CD8-positive, alpha-beta memory T cell (primary cell): ENCODE measurements at regions of chr6 and their contacts with region 1.

Region 1: GRCh38 chr6:110873981-110874879 is at the start of gene AMD1:
- DNase-seq: peak; percentile 89 to 98 (median 95)
- H3K4me3 ChIP-seq: peak within 1 kb of the TSS; percentile 95
- H3K4me3 Mint-ChIP-seq: peak within 1 kb of the TSS in 6 of 7 donors; percentile 98 to 99 (median 98)
- H3K27ac ChIP-seq: peak within 1 kb of the TSS; percentile 99
- H3K27ac Mint-ChIP-seq: peak within 1 kb of the TSS; percentile 87 to 99 (median 99)
- H3K4me1 ChIP-seq: peaks cover 31% of the 10 kb centered on the region
- H3K4me1 Mint-ChIP-seq: peaks cover 30 to 37% (median 33%) of the 10 kb centered on the region in 3 donors
- H3K27me3 ChIP-seq: no peaks in the 10 kb centered on the region
- H3K27me3 Mint-ChIP-seq: peaks cover 0 to 2% of the 10 kb centered on the region in 2 donors
- total RNA-seq, gene AMD1: 95.8 to 96.3 TPM

Region 2: DNA sequence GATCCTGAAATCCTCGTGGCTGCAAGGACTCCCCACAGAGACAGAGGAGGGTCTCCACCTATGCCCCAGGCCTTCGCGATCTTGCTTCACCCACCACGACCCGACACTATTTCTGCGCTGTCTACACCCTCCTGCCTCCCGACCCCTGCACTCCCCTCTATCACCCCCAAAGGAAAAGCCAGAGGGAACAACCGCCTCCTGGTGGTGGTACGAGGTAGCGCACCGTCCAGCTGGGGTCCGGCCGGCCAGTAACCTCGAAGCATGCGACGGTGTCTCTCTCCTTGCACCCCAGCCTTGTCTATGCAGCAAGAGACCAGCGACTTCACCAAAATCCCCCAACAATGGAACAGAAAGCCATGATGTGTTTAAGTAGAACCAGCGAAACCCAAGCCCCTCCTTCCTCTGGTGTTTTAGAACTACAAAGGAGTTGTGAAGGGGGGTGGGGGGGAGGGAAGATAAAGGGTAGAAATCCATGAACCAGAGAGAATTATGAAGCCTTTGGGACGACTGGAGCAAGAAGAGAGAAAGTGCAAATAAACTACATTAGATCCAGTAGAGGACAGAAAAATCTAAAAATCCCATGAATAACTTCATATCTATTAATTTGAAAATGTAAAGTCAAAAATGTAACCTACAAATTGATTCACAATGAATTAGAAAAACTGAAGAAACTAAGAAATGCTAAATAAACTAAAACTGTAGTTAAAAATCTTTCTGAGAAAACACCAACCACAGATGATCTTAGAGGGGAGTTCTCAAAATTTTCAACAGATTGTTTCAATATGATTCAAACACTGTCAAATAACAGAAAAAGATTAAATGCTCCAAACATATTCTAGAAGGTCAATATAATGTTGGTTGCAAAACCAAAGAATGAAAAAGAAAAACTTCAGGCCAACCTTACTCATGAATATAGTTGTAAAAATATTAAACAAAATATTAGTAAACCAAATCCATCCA is 227.0 kb before region 1 on chr6:
- CTCF ChIA-PET with region 1: no interaction called
- POLR2A ChIA-PET with region 1: interaction called, 10 read pairs
- DNase-seq: no peak
- H3K4me3 ChIP-seq: no peak overlapping the region
- H3K4me3 Mint-ChIP-seq: no peak overlapping the region
- H3K27ac ChIP-seq: no peak overlapping the region
- H3K27ac Mint-ChIP-seq: peak overlapping the region in 2 of 8 donors; percentile 13 to 38
- H3K4me1 ChIP-seq: no peaks in the 10 kb centered on the region
- H3K4me1 Mint-ChIP-seq: peaks cover 0 to 1% (median 0%) of the 10 kb centered on the region in 3 donors
- H3K27me3 ChIP-seq: no peaks in the 10 kb centered on the region
- H3K27me3 Mint-ChIP-seq: no peaks in the 10 kb centered on the region

Region 3: DNA sequence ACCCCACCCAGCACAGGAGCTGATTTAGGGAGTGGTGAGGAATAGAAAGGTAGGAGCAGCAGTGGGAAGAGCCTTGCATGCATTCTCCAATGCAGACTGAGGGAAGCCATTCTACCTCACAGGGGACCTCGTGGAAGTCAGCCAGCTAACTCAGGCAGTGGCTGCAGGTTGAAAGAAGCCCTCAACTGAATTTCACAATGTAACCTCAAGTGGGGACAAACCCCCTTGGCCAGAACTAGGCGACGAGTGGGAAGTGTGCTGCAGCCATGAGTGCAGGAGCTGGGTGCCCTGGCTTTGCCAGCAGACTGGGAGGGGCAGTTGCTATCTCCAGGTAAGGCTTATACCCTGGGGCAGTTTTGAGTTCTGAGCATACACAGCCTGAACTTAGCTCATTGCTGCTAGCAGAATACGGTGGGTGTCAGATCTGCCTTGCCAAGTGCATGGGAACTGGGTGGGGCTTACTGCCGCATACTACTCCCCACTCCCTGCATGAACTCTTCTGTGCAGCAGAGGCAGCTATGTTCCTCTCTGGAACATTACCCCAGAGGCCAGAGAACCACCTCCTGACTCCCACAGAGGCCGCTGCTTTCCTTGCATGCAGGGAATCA is 185.5 kb before region 1 on chr6:
- CTCF ChIA-PET with region 1: interaction called, 41 read pairs
- POLR2A ChIA-PET with region 1: interaction called, 22 read pairs
- DNase-seq: no peak
- H3K4me3 ChIP-seq: no peak overlapping the region
- H3K4me3 Mint-ChIP-seq: peak overlapping the region in 5 of 7 donors; percentile 33 to 78 (median 57)
- H3K27ac ChIP-seq: no peak overlapping the region
- H3K27ac Mint-ChIP-seq: peak overlapping the region; percentile 2 to 91 (median 84)
- H3K4me1 ChIP-seq: peaks cover 22% of the 10 kb centered on the region
- H3K4me1 Mint-ChIP-seq: peaks cover 38 to 44% (median 38%) of the 10 kb centered on the region in 3 donors
- H3K27me3 ChIP-seq: no peaks in the 10 kb centered on the region
- H3K27me3 Mint-ChIP-seq: no peaks in the 10 kb centered on the region

Region 4: GRCh38 chr6:110886555-110887167 is 12.4 kb after region 1 on chr6:
- CTCF ChIA-PET with region 1: interaction called, 9 read pairs
- POLR2A ChIA-PET with region 1: interaction called, 10 read pairs
- DNase-seq: no peak
- H3K4me3 ChIP-seq: no peak overlapping the region
- H3K4me3 Mint-ChIP-seq: peak overlapping the region in 5 of 7 donors; percentile 19 to 56 (median 41)
- H3K27ac ChIP-seq: no peak overlapping the region
- H3K27ac Mint-ChIP-seq: peak overlapping the region in 4 of 8 donors; percentile 7 to 48 (median 40)
- H3K4me1 ChIP-seq: peaks cover 51% of the 10 kb centered on the region
- H3K4me1 Mint-ChIP-seq: peaks cover 63 to 84% (median 75%) of the 10 kb centered on the region in 3 donors
- H3K27me3 ChIP-seq: no peaks in the 10 kb centered on the region
- H3K27me3 Mint-ChIP-seq: no peaks in the 10 kb centered on the region

Region 5: DNA sequence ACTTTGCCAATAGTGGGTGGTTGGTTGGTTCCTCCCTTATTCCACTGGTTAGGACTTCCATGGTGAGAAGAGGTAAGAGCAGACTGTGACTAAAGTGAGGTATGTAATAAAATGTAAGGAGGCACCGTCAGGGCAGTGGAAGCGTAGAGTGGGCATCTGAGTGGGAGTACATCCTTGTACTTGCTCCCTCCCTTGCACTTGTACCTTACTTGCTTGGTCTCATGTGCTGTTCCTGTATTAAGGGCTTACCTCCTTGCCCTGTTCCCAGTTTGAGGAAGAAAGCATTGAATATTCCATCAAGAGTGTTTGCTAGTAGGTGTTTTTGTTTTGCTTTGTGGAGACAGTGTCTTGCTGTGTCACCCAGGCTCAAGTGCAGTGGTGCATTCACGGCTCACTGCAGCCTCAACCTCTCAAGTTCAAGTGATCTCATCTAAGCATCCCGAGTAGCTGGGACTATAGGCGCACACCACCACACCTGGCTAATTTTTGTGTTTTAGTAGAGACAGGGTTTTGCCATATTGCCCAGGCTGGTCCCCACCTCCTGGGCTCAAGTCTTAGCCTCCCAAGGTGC is 25.9 kb after region 1 on chr6:
- CTCF ChIA-PET with region 1: no interaction called
- POLR2A ChIA-PET with region 1: no interaction called
- DNase-seq: no peak
- H3K4me3 ChIP-seq: no peak overlapping the region
- H3K4me3 Mint-ChIP-seq: no peak overlapping the region
- H3K27ac ChIP-seq: no peak overlapping the region
- H3K27ac Mint-ChIP-seq: peak overlapping the region in 2 of 8 donors; percentile 12 to 16
- H3K4me1 ChIP-seq: no peaks in the 10 kb centered on the region
- H3K4me1 Mint-ChIP-seq: no peaks in the 10 kb centered on the region
- H3K27me3 ChIP-seq: no peaks in the 10 kb centered on the region
- H3K27me3 Mint-ChIP-seq: no peaks in the 10 kb centered on the region

Region 6: DNA sequence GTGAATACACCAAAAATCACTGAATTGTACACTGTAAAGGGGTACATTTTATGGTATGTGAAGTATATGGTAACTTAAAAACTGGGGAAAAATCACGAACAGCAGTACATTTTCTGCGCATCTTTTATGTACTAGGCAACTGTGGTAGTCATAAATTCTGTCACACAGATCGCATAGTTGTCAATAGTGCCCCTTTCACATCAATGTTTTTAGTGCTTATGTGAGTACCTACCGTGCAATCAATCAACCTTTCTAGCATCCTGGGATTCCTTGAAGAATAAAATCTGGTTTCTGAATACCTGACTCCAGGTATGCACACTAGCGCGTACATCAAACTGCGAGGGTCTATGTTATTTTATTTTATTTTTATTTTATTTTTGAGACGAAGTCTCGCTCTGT is 107.0 kb after region 1 on chr6:
- CTCF ChIA-PET with region 1: interaction called, 8 read pairs
- POLR2A ChIA-PET with region 1: interaction called, 23 read pairs
- DNase-seq: no peak
- H3K4me3 ChIP-seq: peak overlapping the region; percentile 95
- H3K4me3 Mint-ChIP-seq: peak overlapping the region; percentile 97 to 99 (median 99)
- H3K27ac ChIP-seq: peak overlapping the region; percentile 93
- H3K27ac Mint-ChIP-seq: peak overlapping the region; percentile 96 to 100 (median 99)
- H3K4me1 ChIP-seq: peaks cover 10% of the 10 kb centered on the region
- H3K4me1 Mint-ChIP-seq: peaks cover 33 to 57% (median 53%) of the 10 kb centered on the region in 3 donors
- H3K27me3 ChIP-seq: no peaks in the 10 kb centered on the region
- H3K27me3 Mint-ChIP-seq: peaks cover 0 to 3% of the 10 kb centered on the region in 2 donors

Region 7: GRCh38 chr6:111011360-111012142 is 137.3 kb after region 1 on chr6:
- CTCF ChIA-PET with region 1: no interaction called
- POLR2A ChIA-PET with region 1: no interaction called
- DNase-seq: peak in 2 of 5 donors; percentile 19 to 33
- H3K4me3 ChIP-seq: no peak overlapping the region
- H3K4me3 Mint-ChIP-seq: no peak overlapping the region
- H3K27ac ChIP-seq: no peak overlapping the region
- H3K27ac Mint-ChIP-seq: peak overlapping the region in 2 of 8 donors; percentile 6 to 55
- H3K4me1 ChIP-seq: no peaks in the 10 kb centered on the region
- H3K4me1 Mint-ChIP-seq: peaks cover 4 to 5% (median 4%) of the 10 kb centered on the region in 3 donors
- H3K27me3 ChIP-seq: no peaks in the 10 kb centered on the region
- H3K27me3 Mint-ChIP-seq: no peaks in the 10 kb centered on the region